Activated CD8-positive, alpha-beta memory T cell treated with anti-CD3 and anti-CD28 coated beads, Interleukin-2, amount 10 ng/mL, durations not matched to agents 7 days and 5 days (primary cell): ENCODE measurements at regions of chr4 and their contacts with region 1.

Region 1: DNA sequence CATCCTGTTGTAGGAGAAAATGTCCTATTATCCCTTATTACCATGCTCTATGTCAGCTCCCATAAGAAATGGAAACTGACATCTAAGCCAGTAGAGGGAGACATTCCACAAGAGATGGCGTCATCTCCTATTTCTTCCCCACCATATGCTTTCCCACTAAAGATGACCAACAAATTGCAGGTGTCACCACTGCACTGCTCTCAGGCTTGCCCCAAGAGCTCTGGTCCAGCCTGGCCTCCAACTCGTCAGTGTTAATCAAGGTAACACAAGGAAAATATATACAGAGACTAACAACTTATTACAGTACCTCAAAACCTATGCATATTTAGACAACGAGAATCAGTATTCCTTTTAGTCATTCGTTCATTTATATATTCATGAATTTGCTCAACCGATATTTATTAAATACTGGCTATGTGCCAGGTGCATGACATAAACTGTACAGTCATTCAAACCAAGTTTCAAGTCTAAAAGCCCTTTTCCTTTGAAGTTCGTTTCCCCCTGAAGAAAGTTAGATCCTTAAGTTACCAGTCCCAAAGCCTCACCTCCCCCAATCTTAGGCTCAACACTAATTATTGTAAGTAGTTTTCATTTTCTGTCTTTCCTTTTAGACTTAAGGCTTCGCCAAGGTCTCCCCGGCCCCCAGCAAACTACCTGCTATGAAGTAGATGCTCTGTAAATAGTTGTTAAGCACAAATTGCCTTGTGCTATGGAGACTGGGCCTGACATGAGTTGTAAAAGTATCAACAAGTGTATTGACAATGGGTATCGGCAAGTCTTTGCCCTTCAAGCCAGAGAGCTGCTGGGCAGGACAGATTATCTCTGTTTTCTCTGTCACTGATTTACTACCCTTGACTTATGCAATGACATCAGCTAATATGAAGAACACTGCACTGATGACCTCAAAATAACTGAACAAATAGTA is 3.1 kb upstream of the FGB start:
- DNase-seq: no peak
- ATAC-seq: peak; percentile 61
- H3K4me3 Mint-ChIP-seq: no peak overlapping the region
- H3K27ac Mint-ChIP-seq: no peak overlapping the region
- H3K4me1 Mint-ChIP-seq: peaks cover 8% of the 10 kb centered on the region
- H3K27me3 Mint-ChIP-seq: peaks cover 2% of the 10 kb centered on the region

Region 2: GRCh38 chr4:154389148-154389547 is 170.6 kb before region 1 on chr4:
- CTCF ChIA-PET with region 1: no interaction called
- DNase-seq: no peak
- ATAC-seq: no peak
- H3K4me3 Mint-ChIP-seq: no peak overlapping the region
- H3K27ac Mint-ChIP-seq: no peak overlapping the region
- H3K4me1 Mint-ChIP-seq: no peaks in the 10 kb centered on the region
- H3K27me3 Mint-ChIP-seq: no peaks in the 10 kb centered on the region

Region 3: GRCh38 chr4:154534296-154534695 is 25.5 kb before region 1 on chr4:
- CTCF ChIA-PET with region 1: no interaction called
- DNase-seq: no peak
- ATAC-seq: no peak
- H3K4me3 Mint-ChIP-seq: no peak overlapping the region
- H3K27ac Mint-ChIP-seq: no peak overlapping the region
- H3K4me1 Mint-ChIP-seq: no peaks in the 10 kb centered on the region
- H3K27me3 Mint-ChIP-seq: no peaks in the 10 kb centered on the region

Region 4: DNA sequence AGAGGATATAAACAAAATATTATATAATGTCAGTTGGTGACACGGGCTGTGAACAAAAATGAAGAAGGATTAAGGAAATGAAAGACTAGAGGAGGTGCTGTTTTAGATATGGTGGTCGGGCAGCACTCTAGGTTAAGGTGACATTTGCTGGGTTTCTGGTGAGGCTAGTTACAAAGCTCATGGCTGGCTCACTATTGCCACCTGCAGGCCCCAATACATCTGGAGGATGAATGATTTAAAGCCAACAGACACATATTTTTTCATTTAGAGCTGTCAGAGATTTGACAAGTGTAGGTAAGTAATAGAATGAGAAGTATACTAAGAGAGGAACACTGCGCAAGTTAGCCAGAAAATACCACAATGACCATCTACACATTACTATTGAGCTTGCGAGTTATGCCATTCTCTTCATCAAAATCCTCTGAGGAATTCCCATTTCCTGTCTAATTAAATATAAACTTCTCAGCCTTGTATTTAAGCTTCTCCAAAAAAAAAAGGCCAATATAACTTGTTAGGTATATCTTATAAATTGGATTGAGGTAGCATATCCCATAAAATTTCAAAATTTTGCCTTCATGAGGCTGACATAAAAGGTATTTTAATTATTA is 59.1 kb after region 1 on chr4:
- CTCF ChIA-PET with region 1: interaction called, 61 read pairs
- DNase-seq: peak; percentile 75
- ATAC-seq: peak; percentile 82
- H3K4me3 Mint-ChIP-seq: no peak overlapping the region
- H3K27ac Mint-ChIP-seq: no peak overlapping the region
- H3K4me1 Mint-ChIP-seq: peaks cover 7% of the 10 kb centered on the region
- H3K27me3 Mint-ChIP-seq: peaks cover 4% of the 10 kb centered on the region